ENCODE measurements at regions of chr5 and their contacts with region 1.

Region 1: DNA sequence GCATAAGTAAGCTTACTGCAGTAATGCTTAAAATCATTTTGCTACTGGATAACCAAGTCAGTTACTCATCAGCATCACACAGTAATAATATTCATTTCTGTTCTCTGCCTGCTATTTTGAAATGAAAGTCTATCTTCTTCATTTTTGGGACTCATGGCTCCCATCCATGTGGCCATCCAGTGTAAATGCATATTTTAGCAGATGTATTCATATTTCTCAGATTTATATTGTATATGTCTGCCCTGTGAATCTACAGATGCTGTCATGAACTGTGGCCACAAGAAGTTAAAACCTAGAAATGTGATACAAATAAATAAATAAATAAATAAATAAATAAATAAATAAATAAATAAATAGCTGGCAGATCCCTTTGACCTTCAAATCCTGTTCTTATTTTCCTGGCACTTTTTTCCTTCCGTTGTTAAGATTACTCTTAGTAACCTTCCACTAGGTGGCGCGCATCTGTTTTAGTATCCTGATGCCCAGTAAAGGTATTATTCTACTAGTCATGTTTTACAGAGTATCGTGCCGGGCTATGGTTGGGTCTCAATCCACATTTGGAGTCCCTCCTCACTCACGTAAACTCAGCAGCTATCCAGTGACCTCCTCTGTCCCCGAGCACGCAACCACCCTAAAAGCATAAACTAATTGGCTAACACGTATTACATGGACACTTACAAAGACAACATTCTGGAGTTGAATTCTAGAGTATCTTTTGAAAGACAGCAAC is 79.2 kb upstream of the IL7R start:
- DNase-seq: peak; percentile 72
- H3K4me3 Mint-ChIP-seq: no peak overlapping the region
- H3K27ac Mint-ChIP-seq: peak overlapping the region; percentile 65
- H3K4me1 Mint-ChIP-seq: peaks cover 79% of the 10 kb centered on the region
- H3K27me3 Mint-ChIP-seq: no peaks in the 10 kb centered on the region

Region 2: DNA sequence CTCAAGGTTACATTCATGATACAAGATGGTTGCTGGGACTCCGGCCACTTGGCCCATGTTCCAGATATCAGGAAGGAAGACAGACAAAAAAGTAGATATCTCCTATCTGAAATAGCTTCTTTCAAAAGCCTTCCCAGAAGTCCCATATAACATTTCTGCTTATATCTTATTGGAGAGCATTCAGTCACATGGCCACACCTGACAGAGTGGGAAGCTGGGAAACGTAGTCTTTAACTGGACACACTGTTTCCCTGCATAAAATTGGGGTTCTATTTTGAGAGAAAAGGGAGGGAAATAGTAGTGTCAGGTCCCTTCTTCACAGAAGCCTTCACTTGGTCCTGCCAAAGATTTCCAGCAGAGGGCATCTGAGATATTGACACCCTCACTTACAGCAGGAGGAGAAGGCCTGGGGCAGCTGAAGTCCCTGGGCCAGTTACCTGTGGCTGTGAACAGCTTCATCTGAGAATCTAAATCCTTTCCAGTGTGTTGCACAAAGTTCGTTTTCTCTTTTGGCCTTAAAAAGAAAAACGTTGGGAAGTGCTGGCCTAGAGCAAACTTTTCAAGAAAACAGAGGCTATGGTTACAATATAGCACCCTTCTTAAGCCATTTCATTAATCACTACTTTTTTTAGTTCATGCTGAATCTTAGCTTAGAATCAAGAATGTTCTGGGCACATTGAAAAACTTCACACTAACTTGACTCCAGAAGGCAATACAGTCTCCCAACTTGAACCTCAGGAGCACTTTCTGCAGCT is 126.3 kb before region 1 on chr5:
- CTCF ChIA-PET with region 1: interaction called, 17 read pairs
- POLR2A ChIA-PET with region 1: interaction called, 5 read pairs
- DNase-seq: peak; percentile 68
- H3K4me3 Mint-ChIP-seq: no peak overlapping the region
- H3K27ac Mint-ChIP-seq: no peak overlapping the region
- H3K4me1 Mint-ChIP-seq: peaks cover 2% of the 10 kb centered on the region
- H3K27me3 Mint-ChIP-seq: no peaks in the 10 kb centered on the region

Region 3: DNA sequence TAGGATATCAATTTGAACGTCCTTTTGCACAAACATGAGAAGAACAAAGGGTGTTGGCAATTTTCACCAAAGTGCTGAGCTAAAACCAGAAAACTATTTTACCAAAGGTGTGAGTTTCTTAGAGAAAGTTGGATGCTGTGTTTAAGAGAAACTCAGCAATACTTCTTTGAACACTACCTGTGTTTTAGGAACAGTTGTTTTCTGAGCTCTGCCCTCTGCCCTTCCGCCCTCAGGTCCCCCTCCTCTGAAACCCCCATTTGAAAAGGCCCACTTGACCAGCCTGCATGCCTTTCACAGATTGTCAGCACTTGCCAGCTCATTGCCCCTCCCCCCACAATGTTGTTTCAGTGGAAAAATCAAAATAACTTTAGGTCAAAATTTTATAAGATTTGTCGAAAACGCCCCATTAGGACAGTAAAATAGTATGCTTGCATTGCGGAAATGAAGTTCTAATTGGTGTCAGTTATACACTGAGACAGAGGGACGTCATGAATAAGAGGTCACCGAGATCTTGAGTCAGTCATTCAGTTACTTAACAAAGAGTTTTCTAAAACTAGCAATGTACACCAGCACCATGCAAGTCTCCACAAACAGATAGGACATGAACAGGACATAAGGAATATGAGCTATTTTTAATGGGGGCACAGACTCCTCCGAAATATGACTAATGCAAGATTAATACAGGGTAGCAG is 17.3 kb after region 1 on chr5:
- CTCF ChIA-PET with region 1: interaction called, 25 read pairs
- POLR2A ChIA-PET with region 1: interaction called, 32 read pairs
- DNase-seq: no peak
- H3K4me3 Mint-ChIP-seq: no peak overlapping the region
- H3K27ac Mint-ChIP-seq: peak overlapping the region; percentile 91
- H3K4me1 Mint-ChIP-seq: peaks cover 79% of the 10 kb centered on the region
- H3K27me3 Mint-ChIP-seq: no peaks in the 10 kb centered on the region

Region 4: DNA sequence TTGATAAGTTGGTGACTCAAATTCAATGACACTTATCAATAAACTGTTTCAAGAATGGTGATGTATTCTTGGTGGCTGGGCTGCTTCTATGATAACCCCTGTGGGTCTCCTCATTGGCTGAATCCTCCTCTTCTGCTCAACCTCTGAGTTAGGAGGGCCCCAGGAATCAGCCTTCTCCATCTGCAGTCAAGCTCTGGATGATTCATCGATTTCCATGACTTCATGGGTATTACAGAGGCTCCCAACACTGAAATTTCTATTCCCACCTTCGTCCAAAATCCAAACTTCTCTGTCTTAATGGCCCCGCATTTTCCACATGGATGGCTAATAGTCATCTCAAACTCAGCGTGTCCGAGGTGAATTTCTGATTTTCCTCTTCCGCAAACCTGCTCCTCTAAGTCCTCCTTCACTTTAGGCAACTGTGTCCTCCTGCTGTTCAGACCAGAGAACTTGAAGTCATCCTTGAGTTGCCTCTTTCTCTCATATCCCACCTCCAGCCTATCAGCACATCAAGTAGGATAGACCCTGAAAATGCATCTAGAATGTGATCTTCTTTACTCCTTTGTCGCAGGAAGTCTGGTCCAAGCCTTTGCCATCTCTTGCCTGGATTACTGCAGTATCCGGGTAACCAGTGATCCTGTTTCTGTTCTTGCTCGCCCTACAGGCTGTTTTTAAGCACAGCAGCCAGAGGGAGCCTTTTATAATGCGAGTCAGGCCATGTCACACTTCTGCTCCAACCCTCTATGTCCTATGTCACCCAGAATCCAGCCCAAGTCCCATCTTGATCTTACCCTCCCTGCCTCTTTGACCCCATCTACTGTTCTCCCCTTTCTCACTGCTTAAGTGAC is 37.8 kb after region 1 on chr5:
- CTCF ChIA-PET with region 1: interaction called, 5 read pairs
- POLR2A ChIA-PET with region 1: interaction called, 30 read pairs
- DNase-seq: peak; percentile 63
- H3K4me3 Mint-ChIP-seq: no peak overlapping the region
- H3K27ac Mint-ChIP-seq: no peak overlapping the region
- H3K4me1 Mint-ChIP-seq: peaks cover 47% of the 10 kb centered on the region
- H3K27me3 Mint-ChIP-seq: no peaks in the 10 kb centered on the region

Region 5: GRCh38 chr5:35822511-35822910 is 45.0 kb after region 1 on chr5:
- CTCF ChIA-PET with region 1: interaction called, 12 read pairs
- POLR2A ChIA-PET with region 1: interaction called, 18 read pairs
- DNase-seq: peak; percentile 60
- H3K4me3 Mint-ChIP-seq: peak overlapping the region; percentile 12
- H3K27ac Mint-ChIP-seq: peak overlapping the region; percentile 79
- H3K4me1 Mint-ChIP-seq: peaks cover 88% of the 10 kb centered on the region
- H3K27me3 Mint-ChIP-seq: no peaks in the 10 kb centered on the region

Region 6: DNA sequence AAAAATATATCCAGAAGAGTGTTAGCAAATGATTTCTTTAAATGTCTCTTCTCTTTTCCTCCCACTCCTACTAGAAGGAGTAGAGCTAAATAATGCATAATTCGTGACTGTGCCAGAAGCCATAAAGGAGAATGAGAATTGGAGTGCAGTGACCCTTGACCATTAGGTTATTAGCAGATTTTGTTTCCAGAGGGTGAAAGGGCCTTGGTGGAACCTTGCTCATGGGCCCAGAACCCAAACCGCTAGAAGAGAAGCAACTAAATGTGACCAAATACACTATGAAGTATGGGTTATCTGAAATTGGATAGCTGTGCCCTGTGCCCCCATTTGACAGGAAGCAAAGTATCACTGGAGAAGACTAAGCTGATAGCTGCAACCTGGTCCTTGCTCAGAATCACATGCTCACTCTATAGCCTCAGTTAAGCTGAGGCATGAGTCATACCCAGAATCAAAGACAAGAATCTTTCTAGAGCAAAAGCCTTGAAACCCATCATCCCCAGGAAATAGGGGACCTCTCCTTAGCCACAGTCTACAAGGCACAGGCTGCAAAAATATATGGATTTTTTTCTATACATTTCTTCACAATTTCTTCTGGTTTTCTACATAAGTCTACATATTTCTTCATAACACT is 124.6 kb after region 1 on chr5:
- CTCF ChIA-PET with region 1: interaction called, 10 read pairs
- POLR2A ChIA-PET with region 1: no interaction called
- DNase-seq: peak; percentile 52
- H3K4me3 Mint-ChIP-seq: peak overlapping the region; percentile 9
- H3K27ac Mint-ChIP-seq: peak overlapping the region; percentile 71
- H3K4me1 Mint-ChIP-seq: peaks cover 77% of the 10 kb centered on the region
- H3K27me3 Mint-ChIP-seq: no peaks in the 10 kb centered on the region

Region 7: GRCh38 chr5:35919191-35919590 is 141.7 kb after region 1 on chr5:
- CTCF ChIA-PET with region 1: interaction called, 124 read pairs
- POLR2A ChIA-PET with region 1: interaction called, 4 read pairs
- DNase-seq: peak; percentile 29
- H3K4me3 Mint-ChIP-seq: no peak overlapping the region
- H3K27ac Mint-ChIP-seq: peak overlapping the region; percentile 11
- H3K4me1 Mint-ChIP-seq: peaks cover 43% of the 10 kb centered on the region
- H3K27me3 Mint-ChIP-seq: no peaks in the 10 kb centered on the region